CD8-positive, alpha-beta memory T cell (primary cell): ENCODE measurements at regions of chr3 and their contacts with region 1.

Region 1: GRCh38 chr3:149936812-149937233 is 33.9 kb downstream of the PFN2 start:
- DNase-seq: peak; percentile 6 to 53 (median 18)
- H3K4me3 ChIP-seq: no peak overlapping the region
- H3K4me3 Mint-ChIP-seq: peak overlapping the region in 1 of 7 donors; percentile 57
- H3K27ac ChIP-seq: no peak overlapping the region
- H3K27ac Mint-ChIP-seq: peak overlapping the region in 1 of 8 donors; percentile 2
- H3K4me1 ChIP-seq: peaks cover 4% of the 10 kb centered on the region
- H3K4me1 Mint-ChIP-seq: peaks cover 19 to 42% (median 40%) of the 10 kb centered on the region in 3 donors
- H3K27me3 ChIP-seq: no peaks in the 10 kb centered on the region
- H3K27me3 Mint-ChIP-seq: no peaks in the 10 kb centered on the region

Region 2: GRCh38 chr3:149925860-149926259 is 11.0 kb before region 1 on chr3:
- CTCF ChIA-PET with region 1: interaction called, 10 read pairs
- POLR2A ChIA-PET with region 1: no interaction called
- DNase-seq: no peak
- H3K4me3 ChIP-seq: no peak overlapping the region
- H3K4me3 Mint-ChIP-seq: no peak overlapping the region
- H3K27ac ChIP-seq: no peak overlapping the region
- H3K27ac Mint-ChIP-seq: no peak overlapping the region
- H3K4me1 ChIP-seq: no peaks in the 10 kb centered on the region
- H3K4me1 Mint-ChIP-seq: peaks cover 5 to 16% (median 9%) of the 10 kb centered on the region in 3 donors
- H3K27me3 ChIP-seq: no peaks in the 10 kb centered on the region
- H3K27me3 Mint-ChIP-seq: no peaks in the 10 kb centered on the region

Region 3: DNA sequence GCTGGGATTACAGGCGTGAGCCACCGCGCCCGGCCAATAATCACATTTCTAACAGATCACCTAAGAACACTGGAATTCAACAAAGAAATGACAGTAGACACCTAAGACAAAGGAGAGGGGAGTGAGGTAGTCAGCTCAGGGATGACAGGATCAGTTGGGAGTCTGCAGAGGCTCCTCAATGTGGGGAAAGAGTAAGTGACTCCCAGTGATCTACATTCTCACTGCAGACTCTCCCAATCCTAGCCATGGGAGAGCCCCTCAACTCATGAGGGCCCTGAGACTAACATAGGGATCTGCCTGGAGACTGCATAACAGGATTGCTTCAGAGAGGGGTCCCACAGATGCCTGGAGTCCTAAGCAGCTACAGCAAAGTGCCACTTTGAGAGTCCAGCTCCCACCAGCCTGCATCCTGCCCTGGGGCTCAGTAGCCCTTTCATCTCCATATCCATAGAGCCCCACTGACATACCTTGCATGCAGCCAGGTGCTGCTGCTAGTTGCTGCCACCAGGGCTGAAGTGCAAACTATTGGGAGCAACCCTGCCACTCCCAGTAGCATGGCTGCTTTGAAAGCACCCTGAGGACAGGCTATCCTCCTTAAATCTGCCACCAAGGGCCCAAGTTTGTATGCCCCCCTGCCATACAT is 55.7 kb after region 1 on chr3:
- CTCF ChIA-PET with region 1: no interaction called
- POLR2A ChIA-PET with region 1: no interaction called
- DNase-seq: no peak
- H3K4me3 ChIP-seq: no peak overlapping the region
- H3K4me3 Mint-ChIP-seq: no peak overlapping the region
- H3K27ac ChIP-seq: no peak overlapping the region
- H3K27ac Mint-ChIP-seq: no peak overlapping the region
- H3K4me1 ChIP-seq: no peaks in the 10 kb centered on the region
- H3K4me1 Mint-ChIP-seq: no peaks in the 10 kb centered on the region
- H3K27me3 ChIP-seq: no peaks in the 10 kb centered on the region
- H3K27me3 Mint-ChIP-seq: peaks cover 13 to 51% of the 10 kb centered on the region in 2 donors

Region 4: GRCh38 chr3:150049317-150049716 is 112.5 kb after region 1 on chr3:
- CTCF ChIA-PET with region 1: no interaction called
- POLR2A ChIA-PET with region 1: no interaction called
- DNase-seq: no peak
- H3K4me3 ChIP-seq: no peak overlapping the region
- H3K4me3 Mint-ChIP-seq: no peak overlapping the region
- H3K27ac ChIP-seq: no peak overlapping the region
- H3K27ac Mint-ChIP-seq: no peak overlapping the region
- H3K4me1 ChIP-seq: no peaks in the 10 kb centered on the region
- H3K4me1 Mint-ChIP-seq: no peaks in the 10 kb centered on the region
- H3K27me3 ChIP-seq: no peaks in the 10 kb centered on the region
- H3K27me3 Mint-ChIP-seq: peaks cover 3 to 32% of the 10 kb centered on the region in 2 donors